ENCODE measurements at regions of chr1 and their contacts with region 1.

Region 1: GRCh38 chr1:59229138-59229537 is 67.8 kb upstream of the FGGY start:
- DNase-seq: no peak
- ATAC-seq: no peak
- H3K4me3 Mint-ChIP-seq: no peak overlapping the region
- H3K27ac Mint-ChIP-seq: no peak overlapping the region
- H3K4me1 Mint-ChIP-seq: no peaks in the 10 kb centered on the region
- H3K27me3 Mint-ChIP-seq: no peaks in the 10 kb centered on the region
- CTCF ChIP-seq: no peak

Region 2: DNA sequence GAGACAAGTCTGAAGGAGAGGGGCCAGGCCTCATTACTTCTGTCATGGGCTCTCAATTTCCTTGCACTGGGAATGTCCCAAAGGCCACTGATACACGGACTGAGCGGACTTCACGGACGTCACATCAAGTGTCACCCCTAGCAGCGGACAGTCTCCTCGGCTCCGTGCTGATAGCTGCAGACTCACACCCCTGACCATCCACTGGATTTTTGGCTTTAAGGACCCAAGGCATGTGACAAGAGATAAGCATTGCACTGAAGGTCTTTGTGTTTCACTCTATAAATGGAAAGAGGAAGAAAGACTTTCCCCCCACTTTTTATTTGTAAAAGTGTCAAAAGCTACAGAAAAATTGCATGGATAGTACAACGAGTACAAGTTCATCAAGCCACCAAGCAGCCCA is 132.6 kb before region 1 on chr1:
- CTCF ChIA-PET with region 1: no interaction called
- POLR2A ChIA-PET with region 1: no interaction called
- intact Hi-C with region 1: no loop called
- DNase-seq: no peak
- ATAC-seq: no peak
- H3K4me3 Mint-ChIP-seq: no peak overlapping the region
- H3K27ac Mint-ChIP-seq: peak overlapping the region; percentile 27
- H3K4me1 Mint-ChIP-seq: peaks cover 19% of the 10 kb centered on the region
- H3K27me3 Mint-ChIP-seq: no peaks in the 10 kb centered on the region
- CTCF ChIP-seq: no peak

Region 3: GRCh38 chr1:59214248-59215208 is 14.6 kb before region 1 on chr1:
- CTCF ChIA-PET with region 1: no interaction called
- POLR2A ChIA-PET with region 1: no interaction called
- intact Hi-C with region 1: no loop called
- DNase-seq: no peak
- ATAC-seq: no peak
- H3K4me3 Mint-ChIP-seq: no peak overlapping the region
- H3K27ac Mint-ChIP-seq: no peak overlapping the region
- H3K4me1 Mint-ChIP-seq: no peaks in the 10 kb centered on the region
- H3K27me3 Mint-ChIP-seq: no peaks in the 10 kb centered on the region
- CTCF ChIP-seq: no peak

Region 4: GRCh38 chr1:59316497-59317128 is 87.5 kb after region 1 on chr1:
- CTCF ChIA-PET with region 1: no interaction called
- POLR2A ChIA-PET with region 1: no interaction called
- intact Hi-C with region 1: no loop called
- DNase-seq: no peak
- ATAC-seq: no peak
- H3K4me3 Mint-ChIP-seq: no peak overlapping the region
- H3K27ac Mint-ChIP-seq: no peak overlapping the region
- H3K4me1 Mint-ChIP-seq: peaks cover 18% of the 10 kb centered on the region
- H3K27me3 Mint-ChIP-seq: no peaks in the 10 kb centered on the region
- CTCF ChIP-seq: no peak

Region 5: DNA sequence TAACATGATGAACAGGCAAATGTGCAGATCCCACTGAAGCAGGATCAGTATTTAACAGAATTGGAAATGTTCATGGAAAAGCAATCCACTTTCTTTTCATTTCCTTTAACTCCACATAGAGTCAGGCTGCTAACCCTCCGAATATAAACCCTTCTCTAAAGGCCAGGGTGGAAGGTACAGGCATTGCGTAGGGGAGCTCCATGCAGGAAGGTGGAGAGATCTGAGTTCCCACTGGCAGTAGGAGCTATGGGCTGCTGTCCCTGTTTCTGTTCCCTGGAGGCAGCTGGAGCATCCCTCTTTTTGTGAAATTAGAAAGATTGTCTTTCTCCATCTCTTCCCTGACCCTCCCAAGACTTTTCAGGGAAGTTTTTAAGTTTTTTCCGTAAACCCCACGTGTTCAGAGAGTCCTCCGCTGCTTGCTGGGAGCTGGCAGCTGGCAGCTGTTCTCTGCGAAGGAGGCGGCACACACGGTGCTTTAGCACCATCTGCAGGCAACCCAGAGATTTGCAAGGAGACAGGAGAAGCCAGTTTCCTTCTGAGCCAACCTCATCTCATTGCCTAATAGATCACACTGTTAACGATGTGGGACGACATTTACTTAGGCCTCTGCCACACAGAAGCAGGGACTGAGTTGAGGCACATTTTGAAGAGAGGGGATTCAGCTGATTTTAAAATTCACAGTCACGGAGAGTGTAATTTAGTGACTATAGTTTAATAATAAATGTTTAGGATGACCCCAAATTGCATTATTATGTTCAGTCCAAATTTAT is 530.2 kb after region 1 on chr1:
- CTCF ChIA-PET with region 1: no interaction called
- POLR2A ChIA-PET with region 1: no interaction called
- intact Hi-C with region 1: loop called (anchors 5 kb)
- DNase-seq: peak; percentile 50
- ATAC-seq: peak; percentile 93
- H3K4me3 Mint-ChIP-seq: peak overlapping the region; percentile 35
- H3K27ac Mint-ChIP-seq: no peak overlapping the region
- H3K4me1 Mint-ChIP-seq: peaks cover 4% of the 10 kb centered on the region
- H3K27me3 Mint-ChIP-seq: no peaks in the 10 kb centered on the region
- CTCF ChIP-seq: peak; percentile 96

Measured in activated B cell treated with CpG ODN at 0.5 μM for 24 hours (primary cell).